ENCODE measurements at regions of chr14 and their contacts with region 1.

Region 1: GRCh38 chr14:80850197-80850814 is 91.2 kb downstream of the CEP128 start:
- DNase-seq: no peak
- ATAC-seq: no peak
- H3K4me3 ChIP-seq: no peak overlapping the region
- H3K27ac ChIP-seq: no peak overlapping the region
- H3K4me1 ChIP-seq: peaks cover 0 to 5% (median 0%) of the 10 kb centered on the region in 12 donors
- H3K27me3 ChIP-seq: no peaks in the 10 kb centered on the region
- CTCF ChIP-seq: peak; percentile 42 to 71 (median 58)
- POLR2A ChIP-seq: no peak

Region 2: DNA sequence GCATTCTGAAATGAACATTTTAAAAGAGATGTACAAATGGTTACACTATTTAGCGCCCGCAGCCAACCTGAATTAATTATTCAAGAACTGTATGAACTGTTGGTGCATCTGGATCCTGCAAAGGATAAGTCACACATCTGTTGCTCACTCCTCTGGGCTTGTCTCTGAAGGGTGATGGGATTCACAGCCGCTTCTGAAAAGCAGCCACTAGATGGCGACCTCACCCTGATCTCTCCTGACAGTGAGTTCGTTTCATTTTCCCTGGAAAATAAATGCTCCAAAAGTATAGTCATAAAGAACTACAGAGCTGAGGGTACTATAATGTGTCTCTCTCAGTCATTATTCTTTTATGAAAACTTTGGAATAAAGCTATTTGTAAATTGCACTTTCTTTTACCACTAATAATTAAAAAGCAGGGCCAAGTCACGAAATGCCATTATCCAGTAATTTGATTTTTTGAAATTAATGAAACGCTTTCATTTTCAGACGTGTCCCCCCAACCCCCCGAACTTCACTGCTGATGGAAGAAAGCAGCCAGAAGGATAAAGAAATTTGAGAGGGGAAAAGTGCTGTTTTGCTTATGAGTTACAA is 1890.5 kb before region 1 on chr14:
- intact Hi-C with region 1: loop called in 3 of 10 experiments (anchors 10 kb)
- DNase-seq: peak; percentile 38 to 64 (median 53)
- ATAC-seq: peak in 3 of 4 donors; percentile 60 to 72 (median 62)
- H3K4me3 ChIP-seq: peak overlapping the region in 8 of 12 donors; percentile 1 to 49 (median 34)
- H3K27ac ChIP-seq: peak overlapping the region in 1 of 12 donors; percentile 7
- H3K4me1 ChIP-seq: no peaks in the 10 kb centered on the region
- H3K27me3 ChIP-seq: peaks cover 0 to 7% (median 0%) of the 10 kb centered on the region in 9 donors
- CTCF ChIP-seq: peak; percentile 75 to 88 (median 82)
- POLR2A ChIP-seq: no peak

Region 3: GRCh38 chr14:78967110-78967809 is 1883.0 kb before region 1 on chr14:
- intact Hi-C with region 1: loop called in 8 of 10 experiments (anchors 5 to 10 kb)
- DNase-seq: no peak
- ATAC-seq: no peak
- H3K4me3 ChIP-seq: no peak overlapping the region
- H3K27ac ChIP-seq: no peak overlapping the region
- H3K4me1 ChIP-seq: peaks cover 0 to 3% (median 0%) of the 10 kb centered on the region in 12 donors
- H3K27me3 ChIP-seq: peaks cover 0 to 7% (median 0%) of the 10 kb centered on the region in 9 donors
- CTCF ChIP-seq: no peak
- POLR2A ChIP-seq: no peak

Region 4: DNA sequence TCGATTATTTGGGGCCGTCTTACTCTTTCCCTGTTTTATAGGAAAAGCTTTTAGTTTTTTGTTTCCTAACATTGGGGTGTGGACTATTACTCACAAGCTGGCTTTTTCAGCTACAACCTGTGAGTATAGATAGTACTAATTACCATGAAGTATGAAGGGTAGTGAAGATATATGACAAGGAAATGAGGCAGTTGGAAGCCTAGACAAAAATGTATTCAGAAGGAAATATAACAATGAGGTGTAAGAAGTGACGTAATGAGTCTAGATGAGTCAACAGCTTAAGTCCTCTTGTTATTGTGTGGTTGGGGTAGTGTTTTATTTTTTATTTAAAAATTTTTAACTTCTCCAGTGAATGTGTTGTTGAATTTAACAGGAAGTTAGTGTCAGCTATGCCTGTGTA is 1875.6 kb before region 1 on chr14:
- intact Hi-C with region 1: loop called in 8 of 10 experiments (anchors 5 to 10 kb)
- DNase-seq: no peak
- ATAC-seq: no peak
- H3K4me3 ChIP-seq: no peak overlapping the region
- H3K27ac ChIP-seq: no peak overlapping the region
- H3K4me1 ChIP-seq: no peaks in the 10 kb centered on the region
- H3K27me3 ChIP-seq: no peaks in the 10 kb centered on the region
- CTCF ChIP-seq: no peak
- POLR2A ChIP-seq: no peak

Measured in heart left ventricle (tissue), 16 donors.